Ovary (tissue), 10 donors: ENCODE measurements at regions of chr6 and their contacts with region 1.

Region 1: DNA sequence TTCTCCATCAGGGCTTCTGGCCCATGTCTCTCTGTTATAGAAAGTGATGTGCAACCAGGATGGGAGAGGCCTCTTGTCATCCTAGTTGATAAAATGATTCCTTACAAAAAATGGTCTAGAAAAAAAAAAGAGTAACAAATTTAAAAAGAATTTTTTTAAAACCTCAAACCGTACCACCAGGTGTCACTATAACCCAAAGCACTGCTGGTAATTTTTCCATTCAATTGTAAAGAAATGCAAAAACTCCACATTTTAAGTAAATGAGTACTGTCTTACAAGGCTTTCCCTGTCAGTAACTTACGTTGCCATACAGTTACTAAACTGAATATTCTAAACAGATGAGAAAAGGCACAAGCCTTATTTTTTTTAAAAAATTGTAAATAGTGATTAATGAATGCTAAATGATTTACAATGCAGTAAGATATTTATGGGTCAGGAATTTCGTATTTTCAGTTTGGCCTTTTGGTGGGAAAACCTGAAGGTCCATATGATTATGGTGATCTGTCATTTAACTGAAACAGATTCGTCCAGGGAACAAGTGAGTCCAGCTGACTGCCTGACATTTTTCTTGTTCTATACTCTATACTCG is 95.4 kb downstream of the OGFRL1 start:
- DNase-seq: no peak
- H3K4me3 ChIP-seq: no peak overlapping the region
- H3K27ac ChIP-seq: no peak overlapping the region
- H3K4me1 ChIP-seq: no peaks in the 10 kb centered on the region
- H3K27me3 ChIP-seq: no peaks in the 10 kb centered on the region
- CTCF ChIP-seq: peak in 1 of 3 donors; percentile 41
- EP300 ChIP-seq: no peak
- POLR2A ChIP-seq: no peak

Region 2: DNA sequence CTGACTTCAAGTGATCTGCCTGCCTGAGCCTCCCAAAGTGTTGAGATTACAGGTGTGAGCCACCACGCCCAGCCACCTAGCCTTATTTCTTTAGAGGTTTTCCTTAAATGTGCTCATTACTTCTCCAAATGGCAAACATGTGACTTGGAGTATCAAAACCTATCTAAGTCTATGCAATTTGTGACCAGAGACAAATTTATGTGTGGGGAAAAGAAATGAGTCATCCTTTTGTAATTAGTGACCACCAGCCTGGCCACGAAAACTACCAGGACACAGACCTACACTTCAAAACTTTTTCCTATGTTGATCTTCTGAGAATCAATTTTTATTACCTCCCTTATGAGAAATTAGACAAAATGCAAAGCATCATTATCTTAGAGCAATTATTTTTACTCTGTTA is 160.0 kb before region 1 on chr6:
- intact Hi-C with region 1: no loop called
- DNase-seq: no peak
- H3K4me3 ChIP-seq: no peak overlapping the region
- H3K27ac ChIP-seq: no peak overlapping the region
- H3K4me1 ChIP-seq: no peaks in the 10 kb centered on the region
- H3K27me3 ChIP-seq: no peaks in the 10 kb centered on the region
- CTCF ChIP-seq: no peak
- EP300 ChIP-seq: no peak
- POLR2A ChIP-seq: no peak

Region 3: DNA sequence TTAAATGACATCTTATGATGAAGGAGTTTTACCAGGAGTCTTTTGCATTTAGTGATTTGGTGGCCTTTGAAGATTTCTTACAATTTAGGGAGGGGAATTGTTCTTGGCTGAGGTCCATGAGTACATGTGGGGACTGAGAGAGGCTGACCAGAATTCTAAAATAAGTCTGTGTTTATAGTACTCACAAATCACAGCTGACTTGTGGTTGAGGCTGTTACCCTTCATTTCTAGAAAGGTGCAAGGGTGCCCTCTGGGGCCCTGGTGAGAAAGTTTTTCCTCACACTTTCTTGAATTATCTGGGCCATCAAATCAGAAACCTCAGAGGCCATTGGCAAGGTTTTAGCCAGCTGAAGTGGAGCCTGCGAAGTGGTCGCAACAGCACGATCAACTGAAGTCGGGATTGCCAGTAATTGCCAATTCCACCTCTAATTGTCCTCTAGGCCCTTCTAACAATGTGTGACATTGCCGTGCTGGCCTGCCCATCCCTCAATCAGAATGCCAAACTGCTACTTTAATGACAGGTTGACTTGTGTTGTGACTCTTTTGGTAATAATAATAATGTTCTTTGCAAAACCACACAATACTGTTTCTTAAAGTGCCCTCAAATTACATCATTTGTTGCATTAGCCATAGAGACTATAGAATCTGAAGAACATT is 126.2 kb after region 1 on chr6:
- intact Hi-C with region 1: loop called in 2 of 4 experiments (anchors 5 to 10 kb)
- DNase-seq: peak in 4 of 5 donors; percentile 17 to 47 (median 23)
- H3K4me3 ChIP-seq: no peak overlapping the region
- H3K27ac ChIP-seq: no peak overlapping the region
- H3K4me1 ChIP-seq: no peaks in the 10 kb centered on the region
- H3K27me3 ChIP-seq: no peaks in the 10 kb centered on the region
- CTCF ChIP-seq: peak in 1 of 3 donors; percentile 22
- EP300 ChIP-seq: no peak
- POLR2A ChIP-seq: no peak